Endothelial cell of umbilical vein (primary cell): ENCODE measurements at regions of chr5 and their contacts with region 1.

Region 1: DNA sequence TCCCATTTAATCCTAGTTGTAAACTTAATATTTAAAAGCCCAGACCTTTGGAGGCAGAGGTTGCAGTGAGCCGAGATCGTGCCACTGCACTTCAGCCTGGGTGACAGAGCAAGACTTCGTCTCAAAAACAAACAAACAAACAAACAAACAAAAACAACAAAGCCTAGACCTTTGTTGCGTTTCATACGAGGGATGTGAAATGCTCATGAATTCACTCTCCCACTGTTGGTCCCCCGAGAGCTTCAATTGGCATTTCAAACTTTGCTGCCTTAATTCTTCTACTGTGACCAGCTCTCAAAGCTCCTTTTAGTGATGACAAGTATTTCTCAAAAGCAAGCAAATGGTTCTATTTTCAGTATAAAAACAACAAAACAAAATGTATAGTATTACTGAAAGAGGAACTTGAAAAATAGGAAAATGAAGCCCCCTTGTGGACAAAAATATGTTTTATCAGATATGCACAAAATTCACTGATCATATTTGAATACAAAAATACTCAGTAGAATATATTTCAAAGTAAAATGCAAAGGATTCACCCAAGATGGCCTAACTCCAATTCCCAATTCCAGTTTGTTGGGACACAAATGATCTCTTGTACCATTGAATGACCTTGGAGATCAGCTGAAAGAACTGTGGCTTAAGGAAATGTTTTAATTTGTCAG is 140.4 kb downstream of the ESM1 start:
- DNase-seq: peak; percentile 65
- H3K4me3 ChIP-seq: no peak overlapping the region
- H3K27ac ChIP-seq: no peak overlapping the region
- H3K4me1 ChIP-seq: peaks cover 6% of the 10 kb centered on the region
- H3K27me3 ChIP-seq: peaks cover 0 to 2% of the 10 kb centered on the region in 2 experiments
- CTCF ChIP-seq: peak; percentile 17 to 45
- POLR2A ChIP-seq: no peak

Region 2: GRCh38 chr5:54460181-54460919 is 384.7 kb before region 1 on chr5:
- CTCF ChIA-PET with region 1: no interaction called
- POLR2A ChIA-PET with region 1: no interaction called
- dilution Hi-C with region 1: no loop called
- intact Hi-C with region 1: no loop called
- DNase-seq: no peak
- H3K4me3 ChIP-seq: no peak overlapping the region
- H3K27ac ChIP-seq: no peak overlapping the region
- H3K4me1 ChIP-seq: no peaks in the 10 kb centered on the region
- H3K27me3 ChIP-seq: peaks cover 9 to 10% of the 10 kb centered on the region in 2 experiments
- CTCF ChIP-seq: no peak
- POLR2A ChIP-seq: no peak

Region 3: GRCh38 chr5:54524704-54525103 is 320.3 kb before region 1 on chr5:
- CTCF ChIA-PET with region 1: interaction called, 218 read pairs
- POLR2A ChIA-PET with region 1: no interaction called
- dilution Hi-C with region 1: no loop called
- intact Hi-C with region 1: no loop called
- DNase-seq: peak; percentile 32
- H3K4me3 ChIP-seq: no peak overlapping the region
- H3K27ac ChIP-seq: peak overlapping the region; percentile 8
- H3K4me1 ChIP-seq: peaks cover 58% of the 10 kb centered on the region
- H3K27me3 ChIP-seq: no peaks in the 10 kb centered on the region
- CTCF ChIP-seq: no peak
- POLR2A ChIP-seq: no peak

Region 4: DNA sequence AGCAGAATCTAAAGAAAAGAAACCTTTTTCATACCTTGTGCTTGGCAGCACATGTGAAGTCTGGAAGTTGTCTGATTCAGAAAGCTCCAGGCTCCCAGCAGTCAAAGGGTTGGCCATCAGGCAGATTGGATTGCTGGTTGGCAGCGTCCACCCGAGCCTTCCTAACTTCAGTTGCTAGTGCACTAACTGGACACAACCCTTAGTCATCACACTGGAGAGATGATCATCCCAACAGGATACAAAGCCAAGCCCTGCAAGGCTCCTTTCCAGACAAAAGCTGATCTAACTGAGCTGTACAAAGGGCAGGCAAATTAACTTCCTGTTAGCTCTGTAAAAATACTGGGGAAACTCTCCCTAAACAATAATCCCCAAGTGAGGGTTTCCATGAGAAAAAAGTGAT is 141.9 kb before region 1 on chr5:
- CTCF ChIA-PET with region 1: interaction called, 11 read pairs
- POLR2A ChIA-PET with region 1: no interaction called
- dilution Hi-C with region 1: no loop called
- intact Hi-C with region 1: loop called (anchors 5 kb)
- DNase-seq: peak; percentile 67
- H3K4me3 ChIP-seq: no peak overlapping the region
- H3K27ac ChIP-seq: no peak overlapping the region
- H3K4me1 ChIP-seq: peaks cover 18% of the 10 kb centered on the region
- H3K27me3 ChIP-seq: no peaks in the 10 kb centered on the region
- CTCF ChIP-seq: no peak
- POLR2A ChIP-seq: no peak

Region 5: DNA sequence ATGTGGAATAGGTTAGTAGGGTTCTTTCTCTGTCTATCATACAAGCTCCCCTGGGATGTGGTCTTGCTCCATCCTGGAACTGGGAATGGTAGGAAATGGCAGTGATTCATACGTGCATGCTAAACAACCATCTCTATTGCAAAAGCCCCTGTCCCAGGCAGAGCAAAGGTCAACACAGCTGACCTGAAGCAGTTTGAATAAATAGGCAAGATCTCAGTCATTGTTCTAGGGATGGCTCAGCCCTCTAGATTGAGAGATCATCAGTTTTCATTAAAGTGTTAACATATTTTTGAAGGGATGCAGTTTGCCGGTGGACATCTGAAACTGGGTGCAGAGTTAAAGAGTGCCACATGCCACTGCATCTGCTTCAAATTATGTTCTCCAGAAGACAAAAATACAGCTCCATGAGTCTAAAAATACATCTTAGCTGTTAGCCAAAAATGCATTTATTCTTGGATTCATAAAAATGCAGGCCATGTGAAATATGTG is 83.8 kb before region 1 on chr5:
- CTCF ChIA-PET with region 1: interaction called, 14 read pairs
- POLR2A ChIA-PET with region 1: no interaction called
- dilution Hi-C with region 1: no loop called
- intact Hi-C with region 1: no loop called
- DNase-seq: peak; percentile 14
- H3K4me3 ChIP-seq: no peak overlapping the region
- H3K27ac ChIP-seq: no peak overlapping the region
- H3K4me1 ChIP-seq: peaks cover 8% of the 10 kb centered on the region
- H3K27me3 ChIP-seq: no peaks in the 10 kb centered on the region
- CTCF ChIP-seq: no peak
- POLR2A ChIP-seq: no peak

Region 6: DNA sequence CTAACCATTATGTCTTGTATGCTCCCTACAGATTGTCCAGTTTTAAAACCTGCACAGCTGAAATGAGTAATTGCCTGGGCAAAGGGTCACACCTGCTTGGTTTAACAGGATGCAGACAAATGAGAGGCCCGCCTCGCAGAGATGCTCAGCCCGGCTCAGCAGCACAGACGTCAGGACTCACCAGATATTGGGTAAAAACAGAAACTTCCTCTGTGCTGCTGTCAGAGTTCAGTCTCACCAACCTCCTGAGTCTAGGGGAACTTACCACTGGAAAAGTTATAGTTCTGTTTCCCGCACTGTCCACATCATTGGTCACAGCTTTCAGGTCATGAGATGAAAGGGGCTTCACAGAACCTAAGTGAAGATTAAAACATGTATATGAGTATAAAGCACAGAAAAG is 12.2 kb before region 1 on chr5:
- CTCF ChIA-PET with region 1: interaction called, 17 read pairs
- POLR2A ChIA-PET with region 1: no interaction called
- dilution Hi-C with region 1: no loop called
- intact Hi-C with region 1: no loop called
- DNase-seq: no peak
- H3K4me3 ChIP-seq: no peak overlapping the region
- H3K27ac ChIP-seq: no peak overlapping the region
- H3K4me1 ChIP-seq: peaks cover 40% of the 10 kb centered on the region
- H3K27me3 ChIP-seq: no peaks in the 10 kb centered on the region
- CTCF ChIP-seq: no peak
- POLR2A ChIP-seq: no peak

Region 7: DNA sequence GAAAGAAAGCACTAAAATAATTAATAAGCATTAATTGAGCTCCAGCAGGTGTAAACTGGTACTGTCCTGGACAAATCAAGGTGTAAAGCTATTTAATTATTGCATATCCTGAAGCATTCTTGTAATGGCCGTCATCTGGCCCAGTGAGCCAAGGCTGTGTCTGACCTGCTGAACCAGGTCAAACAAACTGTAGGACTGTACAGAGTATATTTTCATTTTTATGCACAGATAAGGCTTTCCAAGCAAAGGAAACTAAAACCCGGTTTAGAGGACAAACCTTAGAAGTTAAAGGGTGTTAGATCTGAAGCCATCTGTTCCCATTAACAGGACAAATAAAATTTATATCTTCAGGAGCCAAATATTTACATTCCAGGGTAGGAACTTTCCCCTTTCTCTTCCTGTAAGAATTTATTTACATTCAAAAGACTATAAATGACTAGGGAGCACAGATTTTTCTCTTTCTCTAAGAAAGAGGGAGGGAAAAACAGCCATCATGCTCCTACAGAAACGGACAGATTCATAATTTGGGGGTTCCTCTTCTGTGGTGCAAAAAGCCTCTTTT is 70.5 kb after region 1 on chr5:
- CTCF ChIA-PET with region 1: no interaction called
- POLR2A ChIA-PET with region 1: no interaction called
- dilution Hi-C with region 1: no loop called
- intact Hi-C with region 1: no loop called
- DNase-seq: peak; percentile 54
- H3K4me3 ChIP-seq: no peak overlapping the region
- H3K27ac ChIP-seq: no peak overlapping the region
- H3K4me1 ChIP-seq: peaks cover 18% of the 10 kb centered on the region
- H3K27me3 ChIP-seq: no peaks in the 10 kb centered on the region
- CTCF ChIP-seq: no peak
- POLR2A ChIP-seq: no peak